BJ (cell line): ENCODE measurements at regions of chr6 and their contacts with region 1.

Region 1: GRCh38 chr6:31529329-31530150 is 778 bp downstream of the MCCD1 start:
- DNase-seq: no peak
- H3K4me3 ChIP-seq: no peak overlapping the region
- H3K27me3 ChIP-seq: no peaks in the 10 kb centered on the region
- CTCF ChIP-seq: no peak

Region 2: GRCh38 chr6:31351401-31352309 is 177.9 kb before region 1 on chr6:
- CTCF ChIA-PET with region 1: no interaction called
- POLR2A ChIA-PET with region 1: no interaction called
- DNase-seq: no peak
- H3K4me3 ChIP-seq: no peak overlapping the region
- H3K27me3 ChIP-seq: peaks cover 2% of the 10 kb centered on the region
- CTCF ChIP-seq: no peak

Region 3: DNA sequence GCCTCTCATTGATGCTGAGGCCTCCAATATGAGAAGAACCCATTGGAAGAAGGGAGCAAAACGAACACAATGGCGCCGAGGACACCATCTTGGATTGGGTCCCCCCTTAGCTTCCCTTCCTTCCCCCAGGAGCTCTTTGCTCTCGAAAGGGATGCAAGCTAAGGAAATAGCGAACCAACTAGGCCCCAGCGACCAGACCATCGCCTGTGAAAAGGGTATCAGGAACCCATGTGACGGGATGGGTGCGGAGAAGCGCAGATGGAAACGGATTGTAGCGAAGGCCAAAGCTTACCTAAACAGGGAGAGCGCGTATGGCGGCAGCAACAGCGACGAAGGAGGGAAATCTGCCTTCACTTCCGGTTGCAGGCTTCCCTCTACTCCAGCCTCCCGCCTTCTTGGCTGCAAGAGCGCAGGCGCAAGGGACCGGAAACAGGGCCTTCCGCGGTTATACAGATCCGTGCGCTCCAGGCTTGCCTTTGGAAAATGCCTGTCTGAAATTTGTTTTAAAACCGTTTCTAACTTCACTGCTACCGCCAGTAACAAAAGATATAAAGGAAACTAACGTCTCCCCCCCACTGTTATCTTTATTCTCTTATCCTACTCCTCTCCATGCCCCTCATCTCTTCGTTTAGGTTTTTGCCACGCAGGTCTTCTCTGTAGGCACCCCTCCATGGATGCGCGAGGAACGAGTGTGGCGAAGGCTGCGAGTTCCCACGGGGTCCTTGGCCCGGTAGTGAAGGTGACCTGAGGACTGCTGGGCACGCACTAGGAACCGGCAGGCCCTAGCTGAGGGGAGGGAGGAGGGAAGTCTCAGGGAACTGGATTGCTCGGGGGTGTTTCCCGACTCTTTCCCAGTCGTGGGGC is 12.3 kb after region 1 on chr6 and contains the start of gene DDX39B:
- CTCF ChIA-PET with region 1: interaction called, 12 read pairs
- POLR2A ChIA-PET with region 1: interaction called, 4 read pairs
- DNase-seq: peak; percentile 85
- H3K4me3 ChIP-seq: peak within 1 kb of the TSS; percentile 67
- H3K27me3 ChIP-seq: no peaks in the 10 kb centered on the region
- CTCF ChIP-seq: no peak
- polyA plus RNA-seq, gene DDX39B: 412 and 584 TPM in 2 replicates

Region 4: GRCh38 chr6:31568537-31568961 is 39.0 kb after region 1 on chr6:
- CTCF ChIA-PET with region 1: no interaction called
- POLR2A ChIA-PET with region 1: no interaction called
- DNase-seq: no peak
- H3K4me3 ChIP-seq: no peak overlapping the region
- H3K27me3 ChIP-seq: peaks cover 1% of the 10 kb centered on the region
- CTCF ChIP-seq: no peak

Region 5: DNA sequence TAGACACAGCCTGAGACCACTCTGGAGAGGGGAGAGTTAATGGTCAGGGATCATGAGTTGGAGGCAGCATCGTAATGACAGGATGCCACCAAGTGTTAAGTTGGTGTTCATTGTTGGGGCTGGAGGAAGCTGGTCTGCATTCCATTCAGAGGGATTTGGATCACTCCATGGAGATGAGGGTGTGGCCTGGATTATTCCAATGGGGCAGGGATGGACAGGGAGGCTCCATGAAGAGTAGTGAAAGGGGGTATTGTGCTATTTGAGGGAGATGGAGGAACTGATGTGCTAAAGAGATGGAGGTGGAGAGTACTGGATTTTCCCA is 234.0 kb after region 1 on chr6:
- CTCF ChIA-PET with region 1: no interaction called
- POLR2A ChIA-PET with region 1: no interaction called
- DNase-seq: peak; percentile 39
- H3K4me3 ChIP-seq: no peak overlapping the region
- H3K27me3 ChIP-seq: no peaks in the 10 kb centered on the region
- CTCF ChIP-seq: no peak

Region 6: GRCh38 chr6:31806465-31807272 is 277.1 kb after region 1 on chr6 and contains the start of gene LSM2:
- CTCF ChIA-PET with region 1: no interaction called
- POLR2A ChIA-PET with region 1: interaction called, 13 read pairs
- DNase-seq: peak; percentile 91
- H3K4me3 ChIP-seq: peak within 1 kb of the TSS; percentile 72
- H3K27me3 ChIP-seq: no peaks in the 10 kb centered on the region
- CTCF ChIP-seq: peak; percentile 32
- polyA plus RNA-seq, gene LSM2: 40.3 and 43.5 TPM in 2 replicates